ENCODE measurements at regions of chr2 and their contacts with region 1.

Region 1: GRCh38 chr2:230068016-230068650 is 591 bp downstream of the SLC16A14 start:
- DNase-seq: peak; percentile 22
- H3K4me3 Mint-ChIP-seq: peak overlapping the region; percentile 88
- H3K27ac Mint-ChIP-seq: no peak overlapping the region
- H3K4me1 Mint-ChIP-seq: peaks cover 22% of the 10 kb centered on the region
- H3K27me3 Mint-ChIP-seq: peaks cover 21% of the 10 kb centered on the region

Region 2: DNA sequence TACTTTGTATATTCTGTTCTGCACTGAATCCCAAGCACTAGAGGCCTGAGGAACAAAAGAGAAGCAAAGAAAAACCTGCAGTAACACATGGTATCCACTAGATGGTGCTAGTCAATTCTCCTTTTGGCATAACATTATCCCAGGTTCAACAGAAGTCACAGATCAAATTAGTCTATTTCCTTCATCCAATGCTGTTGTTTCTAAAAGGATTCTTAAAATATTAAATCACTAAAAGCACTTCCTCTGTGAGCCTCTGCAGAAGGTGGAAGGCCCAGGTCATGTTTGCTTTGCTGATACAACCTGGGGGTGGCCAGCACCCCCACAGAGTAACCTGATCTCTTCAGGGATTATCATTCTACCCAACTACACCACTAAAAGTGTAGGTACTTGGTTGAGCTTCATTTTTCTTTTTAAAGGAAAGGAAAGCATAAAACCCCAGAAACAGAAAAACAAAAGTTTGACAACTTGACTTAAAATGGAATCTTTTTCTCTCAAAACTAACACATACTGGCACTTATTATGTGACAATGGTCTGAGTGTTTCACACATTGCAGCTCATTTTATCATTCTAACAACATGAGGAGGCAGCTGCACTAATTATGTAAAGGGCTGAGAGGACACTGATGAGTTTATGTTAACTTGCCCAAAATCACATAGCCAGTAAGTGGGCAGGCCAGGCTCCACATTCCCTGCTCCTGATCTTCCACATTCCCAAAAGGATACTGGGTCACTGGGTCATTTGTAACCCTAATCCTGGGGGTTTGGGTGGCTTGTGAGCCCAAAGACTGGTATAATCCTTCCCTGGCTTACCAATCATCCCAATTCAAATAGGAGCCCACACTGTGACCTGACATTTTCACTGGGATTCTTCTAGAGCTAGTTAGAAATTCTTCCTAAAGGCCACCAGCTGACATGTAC is 287.0 kb before region 1 on chr2:
- intact Hi-C with region 1: loop called (anchors 10 kb)
- DNase-seq: no peak
- H3K4me3 Mint-ChIP-seq: no peak overlapping the region
- H3K27ac Mint-ChIP-seq: no peak overlapping the region
- H3K4me1 Mint-ChIP-seq: peaks cover 45% of the 10 kb centered on the region
- H3K27me3 Mint-ChIP-seq: no peaks in the 10 kb centered on the region

Region 3: DNA sequence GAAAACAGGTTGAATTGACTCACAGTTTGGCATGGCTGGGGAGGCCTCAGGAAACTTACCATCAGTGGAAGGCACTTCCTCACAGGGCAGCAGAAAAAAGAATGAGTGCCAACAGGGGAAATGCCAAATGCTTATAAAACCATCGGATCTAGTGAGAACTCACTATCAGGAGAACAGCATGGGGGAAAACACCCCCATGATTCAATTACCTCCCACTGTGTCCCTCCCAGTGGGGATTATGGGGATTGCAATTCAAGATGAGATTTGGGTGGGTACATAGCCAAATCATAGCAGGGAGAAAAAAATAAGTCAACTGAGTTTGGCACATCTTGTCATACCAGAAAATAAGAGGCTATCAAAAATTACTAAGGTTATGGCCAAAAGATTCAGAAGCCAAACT is 242.7 kb before region 1 on chr2:
- intact Hi-C with region 1: loop called (anchors 10 kb)
- DNase-seq: no peak
- H3K4me3 Mint-ChIP-seq: no peak overlapping the region
- H3K27ac Mint-ChIP-seq: no peak overlapping the region
- H3K4me1 Mint-ChIP-seq: peaks cover 37% of the 10 kb centered on the region
- H3K27me3 Mint-ChIP-seq: no peaks in the 10 kb centered on the region

Region 4: GRCh38 chr2:230007931-230008707 is 60.0 kb before region 1 on chr2:
- intact Hi-C with region 1: loop called (anchors 1 kb)
- DNase-seq: peak; percentile 66
- H3K4me3 Mint-ChIP-seq: no peak overlapping the region
- H3K27ac Mint-ChIP-seq: no peak overlapping the region
- H3K4me1 Mint-ChIP-seq: peaks cover 11% of the 10 kb centered on the region
- H3K27me3 Mint-ChIP-seq: no peaks in the 10 kb centered on the region

Region 5: DNA sequence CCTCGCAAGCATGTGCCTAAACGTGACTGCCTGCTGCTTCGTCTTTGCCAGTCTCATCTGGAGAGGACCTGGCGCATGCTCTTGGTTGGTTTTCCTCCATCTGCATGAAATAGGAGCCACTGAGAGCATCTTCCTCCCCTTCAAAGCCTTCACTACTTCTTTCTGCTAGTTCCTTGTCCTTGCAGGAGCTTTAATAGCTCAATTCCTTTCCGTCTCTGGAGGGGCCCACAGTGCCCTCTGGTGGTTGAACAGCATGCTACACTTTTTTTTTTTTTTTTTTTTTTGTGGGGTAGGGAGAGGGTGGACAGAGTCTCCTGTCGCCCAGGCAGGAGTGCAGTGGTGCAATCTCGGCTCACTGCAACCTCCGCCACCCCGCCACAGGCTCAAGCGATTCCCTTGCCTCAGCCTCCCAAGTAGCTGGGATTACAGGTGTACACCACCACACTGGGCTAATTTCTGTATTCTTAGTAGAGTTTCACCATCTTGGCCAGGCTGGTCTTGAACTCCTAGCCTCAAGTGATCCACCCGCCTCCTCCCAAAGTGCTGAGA is 92.1 kb after region 1 on chr2:
- intact Hi-C with region 1: loop called (anchors 1 kb)
- DNase-seq: peak; percentile 33
- H3K4me3 Mint-ChIP-seq: no peak overlapping the region
- H3K27ac Mint-ChIP-seq: no peak overlapping the region
- H3K4me1 Mint-ChIP-seq: peaks cover 13% of the 10 kb centered on the region
- H3K27me3 Mint-ChIP-seq: peaks cover 2% of the 10 kb centered on the region